ENCODE measurements at regions of chr5 and their contacts with region 1.

Region 1: GRCh38 chr5:143002459-143003328 is 232.5 kb downstream of the ARHGAP26 start:
- DNase-seq: peak; percentile 88
- ATAC-seq: peak; percentile 91
- H3K4me3 Mint-ChIP-seq: peak overlapping the region; percentile 63
- H3K27ac Mint-ChIP-seq: peak overlapping the region; percentile 100
- H3K4me1 Mint-ChIP-seq: peaks cover 91% of the 10 kb centered on the region
- H3K27me3 Mint-ChIP-seq: no peaks in the 10 kb centered on the region

Region 2: GRCh38 chr5:142685418-142686209 is 317.1 kb before region 1 on chr5 and contains the start of gene FGF1:
- CTCF ChIA-PET with region 1: no interaction called
- POLR2A ChIA-PET with region 1: no interaction called
- DNase-seq: no peak
- ATAC-seq: no peak
- H3K4me3 Mint-ChIP-seq: no peak within 1 kb of the TSS
- H3K27ac Mint-ChIP-seq: no peak within 1 kb of the TSS
- H3K4me1 Mint-ChIP-seq: no peaks in the 10 kb centered on the region
- H3K27me3 Mint-ChIP-seq: peaks cover 8% of the 10 kb centered on the region
- total RNA-seq, gene FGF1: not detected

Region 3: DNA sequence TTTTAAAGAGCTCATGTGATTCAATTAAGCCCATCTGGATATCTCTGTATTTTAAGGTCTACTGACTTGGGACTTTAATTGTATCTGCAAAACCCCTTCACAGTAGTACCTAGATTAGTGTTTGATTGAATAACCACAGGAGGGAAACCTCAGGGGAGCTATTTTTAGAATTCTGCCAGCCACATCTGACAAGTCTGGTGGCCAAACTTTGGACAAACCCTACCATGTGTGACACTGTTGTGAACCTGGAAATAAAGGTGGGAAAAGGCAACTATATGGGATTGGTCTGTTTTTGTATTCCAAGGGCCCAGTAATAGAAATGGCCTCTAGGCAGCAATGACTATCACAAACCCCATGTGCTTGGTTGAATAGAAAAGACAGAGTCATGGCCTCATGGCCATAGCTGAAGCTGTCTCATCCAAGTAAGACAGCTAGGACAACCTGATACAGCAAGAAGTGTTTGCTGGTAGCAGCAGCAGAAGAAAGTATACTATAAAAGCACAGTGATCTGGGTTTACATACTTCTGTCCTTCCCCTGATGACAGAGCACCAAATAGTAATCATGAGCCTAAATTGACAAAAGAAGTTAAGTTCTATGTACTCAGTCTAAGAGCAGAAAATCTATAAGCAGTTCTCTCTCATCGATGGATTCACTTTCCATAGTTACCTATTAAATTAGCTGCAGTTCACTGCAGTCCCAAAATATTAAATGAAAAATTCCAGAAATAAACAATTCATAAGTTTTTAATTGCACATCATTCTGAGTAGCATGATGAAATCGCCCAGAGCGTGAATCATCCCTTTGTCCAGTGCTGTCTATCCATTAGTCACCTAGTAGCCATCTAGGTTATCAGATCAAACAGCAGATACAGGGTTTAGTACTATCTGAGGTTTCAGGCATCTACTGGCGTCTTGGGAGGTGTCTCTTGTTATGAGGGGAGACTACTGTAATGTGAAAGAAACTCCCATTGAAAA is 42.7 kb before region 1 on chr5:
- CTCF ChIA-PET with region 1: interaction called, 10 read pairs
- POLR2A ChIA-PET with region 1: interaction called, 3 read pairs
- DNase-seq: no peak
- ATAC-seq: peak; percentile 49
- H3K4me3 Mint-ChIP-seq: no peak overlapping the region
- H3K27ac Mint-ChIP-seq: no peak overlapping the region
- H3K4me1 Mint-ChIP-seq: peaks cover 30% of the 10 kb centered on the region
- H3K27me3 Mint-ChIP-seq: no peaks in the 10 kb centered on the region

Region 4: GRCh38 chr5:143023411-143024096 is 20.9 kb after region 1 on chr5:
- CTCF ChIA-PET with region 1: interaction called, 25 read pairs
- POLR2A ChIA-PET with region 1: interaction called, 6 read pairs
- DNase-seq: peak; percentile 68
- ATAC-seq: peak; percentile 86
- H3K4me3 Mint-ChIP-seq: no peak overlapping the region
- H3K27ac Mint-ChIP-seq: peak overlapping the region; percentile 64
- H3K4me1 Mint-ChIP-seq: peaks cover 37% of the 10 kb centered on the region
- H3K27me3 Mint-ChIP-seq: no peaks in the 10 kb centered on the region

Region 5: DNA sequence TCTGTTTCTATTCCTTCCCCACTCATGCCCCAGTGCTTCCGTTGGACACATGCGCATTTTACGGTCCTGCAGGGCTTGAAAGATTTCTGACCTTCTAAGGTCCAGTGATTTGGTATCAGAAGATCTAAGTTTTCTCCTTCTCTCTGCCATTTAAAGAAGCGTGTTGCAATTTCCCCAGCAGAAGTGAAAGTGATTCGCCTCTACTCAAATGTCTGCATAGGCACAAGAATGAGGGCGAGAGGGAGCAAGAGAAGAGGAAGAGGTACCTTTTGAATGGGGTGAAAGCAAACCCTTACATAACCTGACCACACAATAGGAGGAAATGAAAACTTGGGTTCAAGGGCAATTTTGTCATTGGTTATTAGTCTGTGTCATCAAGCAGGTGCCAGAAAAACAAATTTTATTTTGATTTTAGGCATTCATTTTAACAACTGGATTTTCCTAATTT is 432.5 kb after region 1 on chr5:
- CTCF ChIA-PET with region 1: interaction called, 13 read pairs
- POLR2A ChIA-PET with region 1: interaction called, 7 read pairs
- DNase-seq: peak; percentile 56
- ATAC-seq: peak; percentile 77
- H3K4me3 Mint-ChIP-seq: peak overlapping the region; percentile 86
- H3K27ac Mint-ChIP-seq: peak overlapping the region; percentile 94
- H3K4me1 Mint-ChIP-seq: peaks cover 33% of the 10 kb centered on the region
- H3K27me3 Mint-ChIP-seq: no peaks in the 10 kb centered on the region

Region 6: DNA sequence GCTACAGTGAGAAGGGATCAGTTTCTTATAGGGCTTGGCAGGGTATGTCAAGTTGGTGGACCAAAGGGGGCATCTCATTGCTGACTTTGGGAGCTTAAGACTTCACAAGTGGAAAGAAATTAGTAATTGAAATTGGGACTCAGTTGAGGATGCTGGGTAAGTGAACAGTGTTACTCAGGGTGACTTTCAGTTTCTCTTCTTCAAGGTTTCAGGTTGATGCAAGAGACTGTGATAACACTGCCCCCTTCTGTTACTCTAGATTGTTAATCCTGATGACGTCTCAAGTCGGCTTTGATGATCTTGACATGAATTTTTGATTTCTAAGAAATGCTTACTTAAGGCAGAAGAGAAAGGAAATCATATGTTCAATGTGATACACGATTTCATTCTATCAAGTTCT is 1189.3 kb after region 1 on chr5:
- CTCF ChIA-PET with region 1: interaction called, 10 read pairs
- POLR2A ChIA-PET with region 1: interaction called, 3 read pairs
- DNase-seq: peak; percentile 67
- ATAC-seq: peak; percentile 72
- H3K4me3 Mint-ChIP-seq: no peak overlapping the region
- H3K27ac Mint-ChIP-seq: no peak overlapping the region
- H3K4me1 Mint-ChIP-seq: peaks cover 47% of the 10 kb centered on the region
- H3K27me3 Mint-ChIP-seq: no peaks in the 10 kb centered on the region

Measured in activated CD8-positive, alpha-beta T cell treated with anti-CD3 and anti-CD28 coated beads, Interleukin-2, amount 10 ng/mL, durations not matched to agents 7 days and 5 days (primary cell).